ENCODE measurements at regions of chr5 and their contacts with region 1.

Region 1: GRCh38 chr5:142713121-142713706 is 27.3 kb upstream of the FGF1 start:
- DNase-seq: peak; percentile 89
- ATAC-seq: peak; percentile 100
- H3K4me3 Mint-ChIP-seq: peak overlapping the region; percentile 69
- H3K27ac Mint-ChIP-seq: no peak overlapping the region
- H3K4me1 Mint-ChIP-seq: peaks cover 12% of the 10 kb centered on the region
- H3K27me3 Mint-ChIP-seq: peaks cover 20% of the 10 kb centered on the region

Region 2: GRCh38 chr5:142472300-142472951 is 240.8 kb before region 1 on chr5:
- CTCF ChIA-PET with region 1: no interaction called
- POLR2A ChIA-PET with region 1: no interaction called
- DNase-seq: peak; percentile 54
- ATAC-seq: peak; percentile 89
- H3K4me3 Mint-ChIP-seq: no peak overlapping the region
- H3K27ac Mint-ChIP-seq: peak overlapping the region; percentile 40
- H3K4me1 Mint-ChIP-seq: peaks cover 5% of the 10 kb centered on the region
- H3K27me3 Mint-ChIP-seq: peaks cover 2% of the 10 kb centered on the region

Region 3: DNA sequence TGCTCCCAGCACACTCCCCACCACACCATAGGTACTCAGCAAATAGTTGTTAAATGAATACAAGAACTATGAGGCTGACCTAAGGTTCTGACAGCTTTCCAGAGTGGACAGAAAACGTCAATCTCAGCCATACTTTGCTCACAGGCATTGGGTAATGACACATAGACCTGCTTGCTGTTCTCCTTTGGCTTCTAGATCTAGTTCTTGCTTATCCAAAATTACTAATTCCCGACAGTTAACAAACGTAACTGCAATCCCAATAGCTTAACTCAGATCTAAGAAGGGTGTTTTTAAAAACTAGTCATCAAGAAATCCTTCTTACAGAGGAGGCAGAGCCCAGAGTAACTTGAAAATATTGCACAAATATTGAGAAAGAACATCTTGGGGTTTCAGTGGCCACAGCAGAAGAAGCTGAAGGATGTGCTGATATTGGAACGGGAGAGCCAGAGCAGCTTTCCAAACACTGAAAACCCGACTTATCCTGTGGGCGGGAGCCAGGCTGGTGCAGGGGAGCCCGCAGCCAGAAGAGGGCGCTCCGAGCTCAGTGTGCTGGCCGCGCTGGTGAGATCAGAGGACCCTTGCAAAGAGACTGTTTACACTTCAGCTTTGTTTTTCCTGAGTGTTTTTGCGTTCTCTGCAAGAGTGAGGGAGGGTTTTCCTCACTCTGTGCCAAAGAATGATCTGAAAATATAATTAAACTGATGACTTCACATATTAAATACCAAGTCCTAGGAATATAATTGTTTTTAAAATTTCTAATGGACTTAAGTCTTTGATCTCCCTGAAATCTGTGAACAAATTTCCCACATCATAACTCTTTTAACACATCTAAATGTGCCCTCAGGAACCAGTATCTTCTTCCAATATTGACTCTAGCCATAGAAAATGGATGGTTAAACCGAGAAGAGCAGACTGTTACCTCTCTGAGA is 57.6 kb before region 1 on chr5:
- CTCF ChIA-PET with region 1: interaction called, 11 read pairs
- POLR2A ChIA-PET with region 1: no interaction called
- DNase-seq: peak; percentile 73
- ATAC-seq: peak; percentile 94
- H3K4me3 Mint-ChIP-seq: no peak overlapping the region
- H3K27ac Mint-ChIP-seq: no peak overlapping the region
- H3K4me1 Mint-ChIP-seq: no peaks in the 10 kb centered on the region
- H3K27me3 Mint-ChIP-seq: peaks cover 18% of the 10 kb centered on the region

Region 4: DNA sequence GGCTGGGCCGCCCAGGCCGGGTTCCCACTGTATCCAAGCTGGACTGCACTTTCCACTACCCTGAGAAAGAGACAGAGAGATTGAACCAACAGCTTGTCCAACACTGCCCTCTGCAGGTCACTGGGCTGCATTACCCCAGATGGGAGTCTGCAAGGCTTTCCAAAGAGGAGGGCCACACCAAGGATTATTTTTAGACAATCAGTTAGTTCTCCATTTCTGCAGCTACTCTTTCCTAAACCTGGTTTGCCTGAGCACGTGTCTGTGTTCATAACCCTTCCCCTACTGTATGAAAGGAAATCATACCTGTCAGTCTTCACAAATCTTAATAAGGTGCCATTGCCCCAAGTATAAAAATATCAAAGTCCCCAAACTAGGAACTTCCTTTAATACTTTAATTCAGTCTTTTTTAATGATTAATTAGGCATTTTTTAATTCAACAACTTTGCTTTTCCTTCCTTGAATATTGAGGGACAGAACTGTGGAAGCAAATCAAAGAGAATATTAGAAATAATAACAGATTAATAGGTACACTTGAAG is 14.0 kb before region 1 on chr5:
- CTCF ChIA-PET with region 1: interaction called, 39 read pairs
- POLR2A ChIA-PET with region 1: interaction called, 3 read pairs
- DNase-seq: peak; percentile 84
- ATAC-seq: peak; percentile 88
- H3K4me3 Mint-ChIP-seq: no peak overlapping the region
- H3K27ac Mint-ChIP-seq: no peak overlapping the region
- H3K4me1 Mint-ChIP-seq: no peaks in the 10 kb centered on the region
- H3K27me3 Mint-ChIP-seq: peaks cover 21% of the 10 kb centered on the region

Region 5: DNA sequence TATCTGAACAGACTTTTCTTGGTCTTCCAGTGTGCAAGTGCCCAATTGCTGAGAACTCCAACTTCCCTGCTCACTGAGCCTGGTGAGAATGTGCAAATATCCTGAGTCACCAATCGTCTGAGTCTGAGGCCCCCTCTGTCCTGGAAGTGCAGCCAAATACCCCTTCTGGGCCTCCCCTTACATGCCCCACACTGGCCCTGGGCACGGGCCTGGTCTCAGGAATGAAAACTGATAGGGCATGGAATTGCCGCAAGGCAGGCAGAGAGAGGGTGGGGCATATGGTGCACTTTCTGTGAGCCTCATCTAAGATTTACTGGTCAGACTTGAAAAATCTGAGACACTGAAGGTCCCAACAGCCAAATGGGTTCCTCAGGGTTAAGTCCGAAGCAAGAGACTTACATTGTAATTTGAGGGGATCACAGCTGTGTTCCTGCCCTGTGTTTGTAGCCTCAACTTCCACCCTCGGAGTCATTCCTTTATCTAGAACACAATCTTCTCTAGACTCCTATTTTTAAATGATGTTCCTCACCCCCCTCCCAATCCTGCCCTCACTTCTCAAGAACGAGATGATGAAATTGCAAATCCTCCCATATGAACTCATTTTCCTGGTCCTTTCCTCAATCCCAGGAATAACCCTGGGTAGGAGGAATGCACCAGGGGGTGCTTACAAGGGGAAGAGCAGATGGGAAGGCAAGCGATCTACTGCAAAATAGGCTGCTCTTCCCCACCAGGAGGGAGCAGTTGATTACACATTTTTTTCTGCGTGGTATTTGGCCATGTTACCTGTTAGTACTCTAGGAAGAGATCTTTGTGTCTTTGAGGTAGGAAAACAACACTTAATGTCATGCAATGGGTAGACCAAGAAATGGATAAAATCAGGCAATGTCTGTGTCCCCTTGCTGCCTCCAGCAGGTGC is 22.4 kb after region 1 on chr5:
- CTCF ChIA-PET with region 1: interaction called, 22 read pairs
- POLR2A ChIA-PET with region 1: no interaction called
- DNase-seq: no peak
- ATAC-seq: no peak
- H3K4me3 Mint-ChIP-seq: no peak overlapping the region
- H3K27ac Mint-ChIP-seq: no peak overlapping the region
- H3K4me1 Mint-ChIP-seq: peaks cover 16% of the 10 kb centered on the region
- H3K27me3 Mint-ChIP-seq: peaks cover 4% of the 10 kb centered on the region

Region 6: DNA sequence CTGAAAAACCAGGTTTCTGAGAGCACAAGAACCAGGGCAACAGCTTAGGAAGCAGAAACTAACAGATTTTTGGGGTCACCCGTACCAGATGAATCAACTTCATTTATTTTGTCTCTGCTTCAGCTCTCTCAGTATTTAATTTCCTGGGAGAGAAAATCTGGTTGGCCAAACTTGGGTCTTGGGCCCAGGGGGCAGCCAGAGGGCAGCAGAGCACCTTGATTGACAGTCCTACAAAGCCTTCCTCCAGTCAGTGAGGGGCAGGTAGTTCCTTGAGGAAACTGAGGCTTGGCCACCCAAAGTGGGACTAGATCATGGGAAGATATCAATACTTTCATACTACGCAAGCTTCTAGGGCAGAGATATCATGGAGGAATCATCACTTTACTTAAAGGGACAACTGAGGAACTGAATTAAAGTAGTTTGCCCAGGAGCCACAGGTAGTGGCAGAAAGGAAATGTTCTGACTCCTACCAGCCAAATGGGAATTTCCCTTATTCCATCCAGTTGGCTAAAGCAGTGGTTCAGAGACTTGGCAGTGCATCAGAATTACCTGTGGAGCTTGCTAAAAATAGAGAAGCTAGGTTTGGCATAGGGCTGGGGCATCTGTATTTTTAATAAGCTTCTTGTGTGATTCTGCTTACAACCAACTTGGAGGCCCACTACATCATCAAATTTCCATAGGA is 35.5 kb after region 1 on chr5:
- CTCF ChIA-PET with region 1: interaction called, 38 read pairs
- POLR2A ChIA-PET with region 1: no interaction called
- DNase-seq: peak; percentile 62
- ATAC-seq: peak; percentile 65
- H3K4me3 Mint-ChIP-seq: no peak overlapping the region
- H3K27ac Mint-ChIP-seq: no peak overlapping the region
- H3K4me1 Mint-ChIP-seq: peaks cover 10% of the 10 kb centered on the region
- H3K27me3 Mint-ChIP-seq: peaks cover 4% of the 10 kb centered on the region

Region 7: DNA sequence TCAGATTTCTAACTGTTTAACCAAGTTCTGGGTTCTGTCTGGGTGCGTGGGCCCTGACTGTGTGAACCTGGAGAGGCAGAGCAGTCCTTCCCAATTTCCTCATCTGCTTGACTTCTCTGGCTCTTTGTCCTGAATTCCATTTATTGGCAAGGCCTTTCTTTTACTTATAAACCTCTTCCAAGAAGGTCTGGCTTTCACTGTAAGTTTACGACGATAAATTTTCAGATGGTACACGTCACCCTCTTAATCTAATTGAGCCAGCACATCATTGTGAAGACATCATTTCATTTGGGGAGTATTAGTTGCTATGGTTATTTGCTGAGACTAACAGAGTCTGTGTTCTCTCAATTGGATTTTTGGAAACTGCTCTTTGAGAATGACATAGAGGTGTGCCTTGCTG is 149.4 kb after region 1 on chr5:
- CTCF ChIA-PET with region 1: interaction called, 17 read pairs
- POLR2A ChIA-PET with region 1: no interaction called
- DNase-seq: no peak
- ATAC-seq: no peak
- H3K4me3 Mint-ChIP-seq: no peak overlapping the region
- H3K27ac Mint-ChIP-seq: no peak overlapping the region
- H3K4me1 Mint-ChIP-seq: peaks cover 35% of the 10 kb centered on the region
- H3K27me3 Mint-ChIP-seq: no peaks in the 10 kb centered on the region

Region 8: GRCh38 chr5:142915813-142916424 is 202.7 kb after region 1 on chr5:
- CTCF ChIA-PET with region 1: interaction called, 10 read pairs
- POLR2A ChIA-PET with region 1: no interaction called
- DNase-seq: peak; percentile 27
- ATAC-seq: no peak
- H3K4me3 Mint-ChIP-seq: no peak overlapping the region
- H3K27ac Mint-ChIP-seq: no peak overlapping the region
- H3K4me1 Mint-ChIP-seq: no peaks in the 10 kb centered on the region
- H3K27me3 Mint-ChIP-seq: no peaks in the 10 kb centered on the region

Measured in activated CD8-positive, alpha-beta T cell treated with anti-CD3 and anti-CD28 coated beads, Interleukin-2, amount 10 ng/mL, durations not matched to agents 7 days and 5 days (primary cell).